PC-9 (cell line): ENCODE measurements at regions of chr10 and their contacts with region 1.

Region 1: DNA sequence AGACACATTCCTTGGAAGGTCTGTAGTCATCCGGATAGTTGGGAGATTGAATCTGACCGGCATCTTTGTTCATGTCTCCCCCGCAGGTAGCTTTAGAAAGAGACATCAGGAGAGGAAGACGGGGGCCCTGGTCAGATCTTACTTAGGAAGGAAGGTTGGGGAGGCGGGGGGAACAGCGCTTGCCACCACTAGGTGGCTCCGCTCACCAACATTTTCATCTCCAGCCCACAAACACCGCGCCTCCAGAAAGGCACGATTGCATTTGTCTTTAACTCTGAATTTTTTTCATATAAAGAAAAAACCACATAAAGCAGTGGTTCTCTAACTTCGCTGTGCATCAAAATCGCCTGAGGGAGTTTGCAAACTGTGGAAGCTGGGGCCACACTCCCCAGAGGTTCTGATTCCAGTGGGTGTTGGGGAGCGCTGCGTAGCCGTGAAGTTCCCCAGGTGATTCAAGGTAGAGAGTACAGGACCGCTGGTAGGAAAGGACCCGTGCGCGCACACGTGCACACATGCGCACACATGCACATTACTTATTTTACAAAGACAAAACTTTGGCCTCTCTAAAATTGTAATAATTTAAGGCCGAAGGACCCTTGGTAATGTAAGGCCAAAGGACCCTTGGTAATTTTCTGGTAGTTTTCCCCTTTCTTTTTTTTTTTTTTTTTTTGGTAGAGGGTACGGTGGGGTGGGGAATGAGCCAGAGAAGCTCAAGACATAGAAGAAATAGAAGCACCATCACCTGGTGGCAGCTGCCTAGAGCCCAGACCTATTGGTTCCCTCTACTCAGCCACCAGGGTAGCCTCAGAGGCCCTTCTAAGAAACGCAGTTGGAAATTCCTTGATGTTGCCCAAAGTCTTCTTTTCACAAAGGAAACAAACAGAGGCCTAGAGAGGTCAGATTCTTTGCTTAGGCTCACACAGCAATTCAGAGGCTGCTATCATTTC is 37.4 kb upstream of the OPALIN start:
- DNase-seq: peak in 1 of 2 experiments; percentile 31
- H3K4me3 ChIP-seq: no peak overlapping the region
- H3K27ac ChIP-seq: no peak overlapping the region
- H3K4me1 ChIP-seq: no peaks in the 10 kb centered on the region
- H3K27me3 ChIP-seq: peaks cover 4% of the 10 kb centered on the region; the same call in 1 of the 2 replicates
- CTCF ChIP-seq: peak; percentile 78

Region 2: GRCh38 chr10:96511044-96511945 is 115.1 kb after region 1 on chr10:
- CTCF ChIA-PET with region 1: no interaction called
- POLR2A ChIA-PET with region 1: no interaction called
- intact Hi-C with region 1: loop called (anchors 1 kb)
- DNase-seq: peak in 1 of 2 experiments; percentile 26
- H3K4me3 ChIP-seq: no peak overlapping the region
- H3K27ac ChIP-seq: no peak overlapping the region
- H3K4me1 ChIP-seq: no peaks in the 10 kb centered on the region
- H3K27me3 ChIP-seq: no peaks in the 10 kb centered on the region
- CTCF ChIP-seq: peak; percentile 59

Region 3: DNA sequence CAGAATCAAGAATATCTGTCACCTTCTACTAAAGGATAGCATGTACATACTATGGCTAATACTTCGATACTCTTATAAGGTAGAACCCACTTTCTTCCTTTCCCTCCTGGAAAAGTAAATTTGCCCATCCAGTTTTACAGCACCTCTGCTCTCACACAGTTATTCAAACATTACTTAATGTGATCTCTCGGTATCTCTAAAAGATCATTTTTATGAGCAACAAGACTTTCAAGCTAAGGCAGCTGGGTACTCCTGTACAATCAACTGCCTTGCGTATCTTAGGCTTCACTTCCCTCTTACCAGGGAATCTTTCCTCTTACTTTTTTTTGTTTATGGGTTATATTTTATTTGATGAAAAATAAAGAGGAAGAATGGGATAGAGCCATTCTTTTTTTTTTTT is 144.0 kb after region 1 on chr10:
- CTCF ChIA-PET with region 1: no interaction called
- POLR2A ChIA-PET with region 1: interaction called, 11 read pairs
- intact Hi-C with region 1: no loop called
- DNase-seq: no peak
- H3K4me3 ChIP-seq: no peak overlapping the region
- H3K27ac ChIP-seq: no peak overlapping the region
- H3K4me1 ChIP-seq: no peaks in the 10 kb centered on the region
- H3K27me3 ChIP-seq: no peaks in the 10 kb centered on the region
- CTCF ChIP-seq: no peak

Region 4: GRCh38 chr10:96610817-96611216 is 214.6 kb after region 1 on chr10:
- CTCF ChIA-PET with region 1: no interaction called
- POLR2A ChIA-PET with region 1: no interaction called
- intact Hi-C with region 1: no loop called
- DNase-seq: no peak
- H3K4me3 ChIP-seq: no peak overlapping the region
- H3K27ac ChIP-seq: no peak overlapping the region
- H3K4me1 ChIP-seq: no peaks in the 10 kb centered on the region; the same call in 1 of the 2 replicates
- H3K27me3 ChIP-seq: no peaks in the 10 kb centered on the region
- CTCF ChIP-seq: no peak

Region 5: DNA sequence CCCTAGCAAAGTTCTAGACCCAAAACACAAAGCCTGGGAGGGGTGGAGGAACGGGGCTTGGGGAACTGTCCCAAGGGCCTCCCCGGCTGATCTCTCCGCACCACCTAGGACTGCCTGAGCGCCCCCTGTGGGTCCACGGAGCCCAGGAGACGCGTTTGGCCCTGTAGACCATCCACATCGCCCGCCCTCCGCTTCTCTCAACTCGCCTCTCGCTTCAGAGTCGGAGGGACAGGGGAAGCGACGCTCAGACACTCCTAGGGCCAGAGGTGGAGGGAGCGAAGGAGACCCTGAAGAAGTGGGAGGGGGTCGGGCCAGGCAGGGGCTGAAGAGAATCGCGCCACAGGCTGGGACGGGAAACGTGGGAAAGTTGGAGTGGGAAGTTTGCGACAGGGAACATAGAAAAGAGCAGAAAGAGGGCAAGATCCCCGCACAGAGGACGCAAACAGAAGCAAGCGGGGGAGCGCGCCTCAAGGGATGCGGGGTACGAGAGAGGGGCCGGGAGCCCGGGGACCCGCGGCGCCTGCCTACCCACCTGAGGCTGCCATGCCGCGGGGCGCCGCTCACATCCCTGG is 323.7 kb after region 1 on chr10:
- CTCF ChIA-PET with region 1: no interaction called
- POLR2A ChIA-PET with region 1: no interaction called
- intact Hi-C with region 1: no loop called
- DNase-seq: no peak
- H3K4me3 ChIP-seq: no peak overlapping the region
- H3K27ac ChIP-seq: no peak overlapping the region
- H3K4me1 ChIP-seq: no peaks in the 10 kb centered on the region
- H3K27me3 ChIP-seq: no peaks in the 10 kb centered on the region
- CTCF ChIP-seq: no peak

Region 6: DNA sequence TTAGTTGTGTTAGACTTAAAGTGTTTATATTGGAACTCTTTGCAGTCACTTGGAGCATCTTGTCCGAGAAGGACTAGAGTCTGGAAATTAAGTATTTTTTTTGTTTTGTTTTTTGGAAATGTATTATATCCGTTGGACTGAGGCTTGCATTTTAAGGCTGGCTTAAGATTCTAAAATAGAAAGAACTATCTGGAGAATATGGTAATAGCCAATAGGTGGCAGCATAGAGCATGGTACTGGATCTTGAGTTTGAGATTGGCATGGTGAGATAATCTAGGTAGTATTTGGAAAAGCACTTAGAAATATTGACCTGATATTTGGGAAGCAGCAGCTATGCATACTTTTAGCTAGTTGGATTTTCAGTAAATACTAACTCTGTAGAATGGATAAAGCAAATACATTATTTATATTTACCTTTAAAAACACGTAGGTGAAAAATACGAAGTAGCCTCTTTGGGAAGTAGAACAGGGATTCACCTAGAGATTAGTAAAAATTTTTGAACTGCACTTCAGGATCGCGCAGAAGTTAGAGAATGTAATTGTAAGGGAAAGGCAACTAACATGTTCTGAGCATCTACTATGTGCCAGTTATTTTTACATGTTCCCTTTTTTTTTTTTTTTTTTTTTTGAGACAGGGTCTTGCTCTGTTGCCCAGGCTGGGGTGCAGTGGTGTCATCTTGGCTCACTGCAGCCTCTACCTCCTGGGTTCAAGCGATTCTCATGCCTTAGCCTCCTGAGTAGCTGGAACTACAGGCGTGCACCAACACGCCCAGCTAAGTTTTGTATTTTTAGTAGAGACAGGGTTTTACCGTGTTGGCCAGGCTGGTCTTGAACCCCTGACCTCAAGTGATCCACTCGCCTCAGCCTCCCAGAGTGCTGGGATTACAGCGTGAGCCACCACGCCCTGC is 514.5 kb after region 1 on chr10:
- CTCF ChIA-PET with region 1: no interaction called
- POLR2A ChIA-PET with region 1: no interaction called
- intact Hi-C with region 1: no loop called
- DNase-seq: no peak
- H3K4me3 ChIP-seq: no peak overlapping the region
- H3K27ac ChIP-seq: no peak overlapping the region
- H3K4me1 ChIP-seq: no peaks in the 10 kb centered on the region
- H3K27me3 ChIP-seq: no peaks in the 10 kb centered on the region
- CTCF ChIP-seq: peak; percentile 70

Region 7: DNA sequence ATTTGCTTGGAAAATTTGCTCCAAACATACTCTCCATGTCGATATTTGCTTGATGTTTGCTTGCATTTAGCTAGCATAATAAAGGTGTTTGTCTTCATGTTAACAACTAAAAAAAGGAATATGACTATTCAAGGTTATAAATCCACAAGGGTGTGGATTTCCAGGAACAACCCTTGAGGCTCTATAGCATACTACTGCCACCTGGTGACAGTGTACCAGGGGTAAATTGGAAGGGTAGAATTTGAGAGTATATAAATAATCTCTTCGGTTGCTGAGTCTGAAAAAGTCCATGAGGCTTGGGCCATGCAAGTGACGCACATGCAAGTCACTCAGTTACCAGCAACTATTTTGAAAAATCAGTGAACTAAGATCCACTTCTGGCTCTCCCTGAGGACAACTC is 721.2 kb after region 1 on chr10:
- CTCF ChIA-PET with region 1: no interaction called
- POLR2A ChIA-PET with region 1: no interaction called
- intact Hi-C with region 1: loop called (anchors 2 kb)
- DNase-seq: peak in 1 of 2 experiments; percentile 11
- H3K4me3 ChIP-seq: no peak overlapping the region
- H3K27ac ChIP-seq: no peak overlapping the region
- H3K4me1 ChIP-seq: no peaks in the 10 kb centered on the region
- H3K27me3 ChIP-seq: peaks cover 43% of the 10 kb centered on the region
- CTCF ChIP-seq: peak; percentile 61

Region 8: DNA sequence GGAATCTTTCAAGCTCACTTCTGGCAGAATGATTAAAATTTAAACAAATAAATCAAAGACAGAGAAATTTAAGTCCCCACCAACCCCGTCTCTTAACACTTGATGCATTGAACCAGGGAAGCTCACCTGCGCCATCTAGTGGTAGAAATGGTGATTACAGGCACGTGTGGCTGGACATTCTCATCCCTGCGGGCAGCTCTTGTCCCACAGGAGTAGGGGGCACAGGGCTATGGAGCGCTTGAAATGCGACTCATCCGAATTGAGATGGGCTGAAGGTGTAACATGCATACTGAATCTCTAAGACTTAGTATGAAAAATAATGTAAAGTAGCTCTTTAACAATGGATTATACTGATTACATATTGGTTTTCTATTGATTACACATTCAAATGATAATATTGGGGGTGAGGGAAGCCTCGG is 814.3 kb after region 1 on chr10:
- CTCF ChIA-PET with region 1: no interaction called
- POLR2A ChIA-PET with region 1: no interaction called
- intact Hi-C with region 1: loop called (anchors 5 kb)
- DNase-seq: peak in 1 of 2 experiments; percentile 55
- H3K4me3 ChIP-seq: no peak overlapping the region
- H3K27ac ChIP-seq: no peak overlapping the region
- H3K4me1 ChIP-seq: no peaks in the 10 kb centered on the region
- H3K27me3 ChIP-seq: no peaks in the 10 kb centered on the region
- CTCF ChIP-seq: peak; percentile 92

Region 9: DNA sequence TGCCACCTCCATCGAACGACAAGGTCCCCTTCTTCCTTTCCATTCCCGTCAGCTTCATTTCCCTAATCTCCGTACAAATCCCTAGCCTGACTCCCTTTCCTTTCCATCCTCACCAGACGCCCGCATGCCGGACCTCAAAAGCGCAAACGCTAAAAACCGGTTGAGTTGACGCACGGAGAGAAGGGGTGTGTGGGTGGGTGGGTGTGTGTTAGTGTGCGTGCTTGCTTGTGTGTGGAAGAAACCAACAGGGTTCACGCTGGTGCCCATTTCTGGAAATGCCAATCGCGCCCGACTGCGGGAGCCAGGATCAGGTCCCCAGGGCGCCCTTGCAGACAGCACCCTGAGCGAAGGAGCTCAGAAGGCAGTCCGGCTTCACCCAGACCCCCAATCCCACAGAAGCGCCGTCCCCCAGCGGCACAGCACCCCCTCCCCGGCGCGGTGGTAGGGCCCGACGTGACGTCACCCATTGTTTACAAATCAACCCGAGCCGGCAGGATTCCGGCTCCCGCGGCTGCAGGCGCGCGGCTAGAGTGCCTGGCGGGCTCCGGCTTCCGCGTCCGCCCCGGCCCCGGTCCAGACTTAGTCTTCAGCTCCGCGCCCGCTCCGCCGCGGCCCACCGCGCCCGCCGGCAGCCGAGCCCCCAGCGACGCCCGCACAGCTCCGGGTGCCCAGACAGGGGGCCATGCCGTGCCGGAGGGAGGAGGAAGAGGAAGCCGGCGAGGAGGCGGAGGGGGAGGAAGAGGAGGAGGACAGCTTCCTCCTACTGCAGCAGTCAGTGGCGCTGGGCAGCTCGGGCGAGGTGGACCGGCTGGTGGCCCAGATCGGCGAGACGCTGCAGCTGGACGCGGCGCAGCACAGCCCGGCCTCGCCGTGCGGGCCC is 922.8 kb after region 1 on chr10 and contains the start of gene FRAT1:
- CTCF ChIA-PET with region 1: no interaction called
- POLR2A ChIA-PET with region 1: no interaction called
- intact Hi-C with region 1: no loop called
- DNase-seq: peak; percentile 68 to 82
- H3K4me3 ChIP-seq: peak within 1 kb of the TSS; percentile 71
- H3K27ac ChIP-seq: peak within 1 kb of the TSS; percentile 88
- H3K4me1 ChIP-seq: no peaks in the 10 kb centered on the region
- H3K27me3 ChIP-seq: no peaks in the 10 kb centered on the region
- CTCF ChIP-seq: no peak
- total RNA-seq, gene FRAT1: 2.4 and 2.7 TPM in 2 replicates